ENCODE measurements at regions of chr16 and their contacts with region 1.

Region 1: GRCh38 chr16:16014329-16015144 is 65.1 kb downstream of the ABCC1 start:
- DNase-seq: peak; percentile 23 to 65 (median 47)
- H3K4me3 ChIP-seq: no peak overlapping the region
- H3K27ac ChIP-seq: no peak overlapping the region
- H3K4me1 ChIP-seq: peaks cover 4% of the 10 kb centered on the region
- H3K27me3 ChIP-seq: no peaks in the 10 kb centered on the region
- CTCF ChIP-seq: no peak
- EP300 ChIP-seq: no peak
- POLR2A ChIP-seq: no peak

Region 2: GRCh38 chr16:15888072-15888976 is 126.2 kb before region 1 on chr16 and contains the start of gene CEP20:
- intact Hi-C with region 1: loop called in 1 of 4 experiments (anchors 10 kb)
- DNase-seq: peak; percentile 99 to 100 (median 99)
- H3K4me3 ChIP-seq: peak within 1 kb of the TSS; percentile 81
- H3K27ac ChIP-seq: peak within 1 kb of the TSS in 1 of 2 donors; percentile 68
- H3K4me1 ChIP-seq: peaks cover 1% of the 10 kb centered on the region
- H3K27me3 ChIP-seq: no peaks in the 10 kb centered on the region
- CTCF ChIP-seq: peak in 2 of 3 donors; percentile 64 to 68
- EP300 ChIP-seq: peak; percentile 7
- POLR2A ChIP-seq: peak; percentile 41
- total RNA-seq, gene CEP20: 23.4 to 41.3 (median 30.9) TPM

Region 3: DNA sequence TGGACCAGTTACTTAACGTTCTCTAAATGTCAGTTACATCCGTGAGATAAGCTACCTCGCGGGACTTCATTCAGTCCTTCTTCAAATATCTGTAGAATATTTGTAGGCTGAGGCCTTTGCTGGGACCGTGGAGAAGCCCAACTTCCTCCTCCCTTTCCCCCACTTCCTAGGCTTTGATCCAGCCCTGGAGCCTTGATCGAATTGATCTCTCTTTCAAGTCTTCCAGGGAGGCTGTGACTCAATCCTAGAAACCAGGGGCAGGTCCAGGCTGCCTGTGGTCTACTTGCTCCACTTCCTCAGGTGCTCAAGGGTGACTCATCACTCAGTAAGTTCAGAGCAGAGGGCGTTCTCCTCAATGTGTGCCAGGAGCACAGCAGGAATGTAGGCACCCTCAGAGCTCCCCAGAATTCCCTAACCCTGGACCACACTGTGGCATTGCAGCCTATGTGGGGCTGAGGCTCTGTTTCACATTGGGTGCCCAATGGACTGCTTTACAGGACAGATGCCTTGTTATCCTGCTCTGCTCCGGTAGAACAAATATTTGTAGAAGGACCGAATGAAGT is 114.9 kb before region 1 on chr16:
- intact Hi-C with region 1: loop called in 1 of 4 experiments (anchors 5 kb)
- DNase-seq: peak in 1 of 5 donors; percentile 12
- H3K4me3 ChIP-seq: no peak overlapping the region
- H3K27ac ChIP-seq: no peak overlapping the region
- H3K4me1 ChIP-seq: peaks cover 3% of the 10 kb centered on the region
- H3K27me3 ChIP-seq: no peaks in the 10 kb centered on the region
- CTCF ChIP-seq: no peak
- EP300 ChIP-seq: no peak
- POLR2A ChIP-seq: no peak

Region 4: GRCh38 chr16:17359788-17360390 is 1345.4 kb after region 1 on chr16:
- intact Hi-C with region 1: no loop called
- DNase-seq: no peak
- H3K4me3 ChIP-seq: no peak overlapping the region
- H3K27ac ChIP-seq: no peak overlapping the region
- H3K4me1 ChIP-seq: peaks cover 7% of the 10 kb centered on the region
- H3K27me3 ChIP-seq: no peaks in the 10 kb centered on the region
- CTCF ChIP-seq: no peak
- EP300 ChIP-seq: no peak
- POLR2A ChIP-seq: no peak

Measured in ovary (tissue), 10 donors.